ENCODE measurements at regions of chr2 and their contacts with region 1.

Region 1: GRCh38 chr2:152635635-152636298 is 81.5 kb downstream of the PRPF40A start:
- DNase-seq: no peak

Region 2: DNA sequence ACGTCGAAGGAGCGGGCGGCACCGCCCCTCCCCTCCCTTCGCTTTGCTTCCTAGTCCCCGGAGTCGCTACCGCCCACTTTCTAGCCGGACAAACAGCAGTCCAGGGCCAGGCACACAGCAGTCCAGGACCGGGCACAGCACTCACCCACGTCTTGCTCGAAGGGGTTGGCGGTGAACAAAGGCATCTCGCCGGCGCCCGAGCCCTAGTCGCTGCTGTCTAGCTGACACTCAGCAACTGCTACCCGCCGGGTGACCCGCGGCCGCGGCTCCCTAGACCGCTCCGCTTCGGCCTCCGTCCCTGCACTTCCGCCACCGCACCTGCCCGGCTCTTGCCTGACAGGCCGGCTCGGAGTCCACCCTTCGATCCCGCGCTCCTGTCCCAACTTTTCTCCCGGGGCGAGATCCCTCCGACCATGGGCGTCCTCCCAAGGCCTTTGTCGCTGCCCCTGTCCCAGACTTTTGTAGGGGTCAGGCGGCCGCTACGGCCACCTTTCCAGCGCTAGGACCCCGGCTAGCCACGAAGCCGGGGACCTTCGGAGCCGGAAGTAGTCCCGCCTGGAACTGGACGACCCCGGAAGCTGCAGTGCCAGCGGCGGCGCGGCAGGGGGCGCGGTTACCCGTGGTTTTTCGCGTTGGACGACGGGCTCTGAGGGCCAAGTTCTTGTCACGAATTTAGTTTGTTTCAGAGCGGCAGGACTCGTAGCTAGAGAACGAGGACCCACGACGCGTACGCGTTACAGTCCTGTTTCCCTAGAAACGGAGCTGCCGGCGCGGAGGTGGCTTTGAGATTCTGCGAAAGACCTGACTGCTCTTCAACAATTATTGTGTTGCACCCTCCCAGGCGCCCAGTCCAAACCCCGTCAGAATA is 460.1 kb before region 1 on chr2 and contains the start of gene STAM2:
- intact Hi-C with region 1: loop called in 1 of 2 experiments (anchors 5 kb)
- DNase-seq: peak; percentile 97
- total RNA-seq, gene STAM2: 40.9 to 50.8 TPM

Region 3: DNA sequence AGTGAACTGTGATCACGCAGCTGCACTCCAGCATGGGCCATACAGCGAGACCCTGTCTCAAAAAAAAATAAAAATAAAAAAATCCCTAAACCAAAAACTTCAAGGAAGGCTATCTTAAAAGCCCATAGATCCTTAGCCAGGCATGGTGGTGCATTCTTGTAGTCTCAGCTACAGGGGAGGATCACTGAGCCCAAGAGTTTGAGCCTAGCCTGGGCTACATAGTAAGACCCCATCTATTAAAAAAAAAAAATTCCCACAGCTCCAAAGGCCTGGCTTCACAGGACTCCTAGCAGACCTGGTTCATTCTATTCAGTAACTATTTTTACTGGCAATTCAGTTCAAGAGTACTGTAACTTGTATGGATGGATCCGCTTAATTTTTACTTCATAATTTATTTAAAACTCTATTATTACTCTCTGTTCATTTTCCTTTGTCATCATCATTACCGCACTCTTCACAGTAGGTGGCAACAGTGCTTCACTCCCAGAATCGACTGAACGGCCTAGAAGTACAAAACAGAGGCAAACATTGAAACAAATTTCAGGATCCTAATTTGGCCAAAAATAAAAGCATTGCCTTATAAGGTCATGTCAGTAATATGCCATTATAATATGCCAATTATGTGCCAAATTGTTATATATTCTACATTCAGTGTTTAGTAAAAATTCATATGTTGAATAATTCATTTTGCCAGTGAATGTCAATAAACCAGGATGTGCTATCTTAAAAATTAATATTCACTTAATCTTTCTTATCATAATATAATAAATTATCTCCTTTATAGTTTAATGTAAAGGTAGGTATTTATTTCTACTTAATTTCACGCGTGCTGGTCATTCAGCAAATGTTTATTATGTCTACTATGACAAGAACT is 445.9 kb before region 1 on chr2:
- intact Hi-C with region 1: loop called in 1 of 2 experiments (anchors 5 kb)
- DNase-seq: no peak

Region 4: DNA sequence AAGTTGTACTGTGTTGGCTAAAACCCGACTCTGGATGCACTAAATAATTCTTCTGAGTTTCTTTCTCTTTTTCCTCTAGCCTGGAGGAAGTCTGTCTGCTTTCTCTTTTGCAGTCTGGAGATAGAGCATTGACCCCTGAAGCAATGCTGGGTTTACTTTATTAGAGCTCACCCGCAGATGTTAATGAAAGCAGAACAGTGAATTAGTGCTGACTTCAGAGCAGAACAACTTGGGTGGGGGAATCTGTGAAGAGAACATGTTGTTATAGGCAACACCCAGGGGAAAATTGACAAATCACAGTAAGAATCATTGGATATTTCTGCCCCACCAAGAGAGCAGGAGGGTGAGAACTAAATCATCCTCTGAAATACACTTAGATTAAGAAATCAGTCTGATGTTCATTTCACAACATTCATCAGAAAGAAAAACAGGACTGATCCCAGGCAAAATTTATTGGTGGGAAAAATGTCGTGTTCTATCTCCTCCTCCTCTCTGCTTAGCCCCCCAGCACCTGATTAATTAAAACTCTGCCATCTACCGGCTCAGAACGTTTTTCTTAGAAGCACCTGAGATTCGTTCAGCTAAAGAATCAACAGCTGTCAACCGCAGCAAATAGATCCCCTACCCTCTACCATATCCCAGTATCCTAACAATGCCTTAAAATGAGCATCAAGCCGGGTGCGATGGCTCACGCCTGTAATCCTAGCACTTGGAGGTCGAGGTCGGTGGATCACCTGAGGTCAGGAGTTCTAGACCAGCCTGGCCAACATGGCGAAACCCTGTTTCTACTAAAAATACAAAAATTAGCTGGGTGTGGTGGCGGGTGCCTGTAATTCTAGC is 135.7 kb before region 1 on chr2:
- intact Hi-C with region 1: loop called in 1 of 2 experiments (anchors 5 kb)
- DNase-seq: no peak

Measured in posterior vena cava (tissue), 2 donors.